Posterior vena cava (tissue), 2 donors: ENCODE measurements at regions of chr2 and their contacts with region 1.

Region 1: GRCh38 chr2:179751163-179751809 is 110.1 kb downstream of the ZNF385B start:
- DNase-seq: no peak

Region 2: DNA sequence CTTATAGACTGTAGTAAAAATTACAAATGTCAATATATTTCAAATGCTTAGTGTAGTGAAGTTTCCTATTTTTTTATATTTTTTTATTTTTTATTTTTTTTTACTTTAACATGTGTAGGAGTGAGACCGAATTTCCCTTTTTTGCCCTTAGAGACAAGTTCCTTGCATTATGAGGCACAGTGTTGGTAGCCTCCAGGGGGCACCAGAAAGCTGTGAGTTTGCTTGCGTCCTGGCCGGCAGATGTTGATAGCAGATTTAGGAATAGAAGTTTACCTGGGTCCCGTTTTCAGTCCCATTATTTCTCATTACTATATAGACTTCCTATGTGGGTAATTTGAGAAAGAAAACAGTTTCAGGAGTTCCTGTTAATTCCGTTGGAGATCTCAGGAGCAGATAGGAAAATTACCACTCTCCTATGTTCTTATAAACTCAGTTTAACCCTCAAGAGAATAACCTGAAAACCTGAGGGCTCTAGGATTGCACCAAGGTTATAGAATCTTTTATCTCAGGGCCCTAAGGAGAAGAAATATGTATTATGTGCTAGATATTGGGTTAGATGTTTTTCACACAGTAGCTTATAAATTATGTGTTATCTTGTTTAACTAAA is 329.1 kb before region 1 on chr2:
- intact Hi-C with region 1: loop called (anchors 5 to 10 kb)
- DNase-seq: peak; percentile 90

Region 3: DNA sequence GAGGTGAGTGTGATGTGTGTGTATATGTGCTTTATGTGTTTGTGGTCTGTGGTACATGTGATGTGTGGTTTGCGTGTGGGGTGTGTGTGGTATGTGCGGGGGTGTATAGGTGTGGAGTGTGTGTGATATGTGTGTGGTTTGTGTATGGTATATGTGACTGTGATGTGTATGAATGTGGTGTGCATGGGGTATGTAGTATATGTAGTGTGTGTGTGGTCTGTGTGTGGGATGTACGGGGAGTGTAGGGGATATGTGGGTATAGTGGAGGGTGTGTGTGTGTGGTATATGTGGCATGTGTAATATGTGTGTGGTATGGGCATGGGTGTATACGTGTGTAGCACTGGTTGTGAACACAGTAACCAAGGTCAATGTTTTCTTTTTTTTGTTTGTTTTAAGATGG is 22.7 kb after region 1 on chr2:
- intact Hi-C with region 1: no loop called
- DNase-seq: no peak

Region 4: GRCh38 chr2:179991344-179991743 is 240.1 kb after region 1 on chr2:
- intact Hi-C with region 1: no loop called
- DNase-seq: no peak